Activated B cell treated with CpG ODN at 0.5 μM for 24 hours (primary cell): ENCODE measurements at regions of chr16 and their contacts with region 1.

Region 1: DNA sequence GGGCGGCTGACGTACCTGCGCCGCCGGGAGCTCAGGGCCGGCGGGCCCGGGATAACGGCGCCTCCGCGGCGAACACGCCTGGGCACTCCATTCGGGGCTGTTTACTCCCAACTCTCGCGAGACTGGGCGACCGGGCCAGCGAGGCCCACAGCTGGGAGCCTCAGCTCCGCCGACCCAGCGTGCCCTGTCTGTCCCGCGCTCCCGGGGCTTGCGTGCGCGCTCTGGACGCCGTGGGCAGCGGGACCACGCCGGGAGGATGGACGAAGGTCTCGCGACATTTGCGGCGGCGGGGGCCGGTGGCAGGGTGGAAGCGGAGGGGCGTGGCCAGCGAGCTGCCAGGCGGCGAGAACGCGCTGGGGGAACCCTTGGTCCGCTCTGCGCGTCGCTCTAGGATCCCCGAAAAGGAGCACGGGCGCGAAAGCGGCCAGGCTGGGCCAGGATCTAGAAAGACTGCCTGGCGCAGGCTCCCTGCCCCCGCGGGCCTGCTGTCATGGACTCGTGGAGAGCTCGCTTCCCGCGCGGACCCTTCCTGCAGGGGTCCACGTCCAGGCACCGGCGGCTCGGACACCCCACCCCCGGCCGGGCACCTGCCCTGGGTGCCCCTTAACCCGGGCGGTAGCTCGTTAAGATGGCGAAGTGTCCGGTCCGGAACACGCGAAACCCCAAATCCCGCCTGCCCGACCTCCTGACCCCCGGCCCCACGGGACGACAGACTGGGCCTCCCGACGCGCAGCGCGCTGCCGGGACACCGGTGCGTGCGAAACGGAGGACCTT is at the start of gene MBTPS1:
- DNase-seq: peak; percentile 99
- ATAC-seq: peak; percentile 91
- H3K4me3 Mint-ChIP-seq: peak within 1 kb of the TSS; percentile 92
- H3K27ac Mint-ChIP-seq: peak within 1 kb of the TSS; percentile 89
- H3K4me1 Mint-ChIP-seq: peaks cover 25% of the 10 kb centered on the region
- H3K27me3 Mint-ChIP-seq: no peaks in the 10 kb centered on the region
- CTCF ChIP-seq: no peak
- total RNA-seq, gene MBTPS1: 74.1 and 79.2 TPM in 2 replicates

Region 2: GRCh38 chr16:84044118-84044488 is 72.8 kb before region 1 on chr16:
- CTCF ChIA-PET with region 1: no interaction called
- POLR2A ChIA-PET with region 1: no interaction called
- intact Hi-C with region 1: no loop called
- DNase-seq: no peak
- ATAC-seq: no peak
- H3K4me3 Mint-ChIP-seq: no peak overlapping the region
- H3K27ac Mint-ChIP-seq: no peak overlapping the region
- H3K4me1 Mint-ChIP-seq: no peaks in the 10 kb centered on the region
- H3K27me3 Mint-ChIP-seq: peaks cover 18% of the 10 kb centered on the region
- CTCF ChIP-seq: no peak

Region 3: DNA sequence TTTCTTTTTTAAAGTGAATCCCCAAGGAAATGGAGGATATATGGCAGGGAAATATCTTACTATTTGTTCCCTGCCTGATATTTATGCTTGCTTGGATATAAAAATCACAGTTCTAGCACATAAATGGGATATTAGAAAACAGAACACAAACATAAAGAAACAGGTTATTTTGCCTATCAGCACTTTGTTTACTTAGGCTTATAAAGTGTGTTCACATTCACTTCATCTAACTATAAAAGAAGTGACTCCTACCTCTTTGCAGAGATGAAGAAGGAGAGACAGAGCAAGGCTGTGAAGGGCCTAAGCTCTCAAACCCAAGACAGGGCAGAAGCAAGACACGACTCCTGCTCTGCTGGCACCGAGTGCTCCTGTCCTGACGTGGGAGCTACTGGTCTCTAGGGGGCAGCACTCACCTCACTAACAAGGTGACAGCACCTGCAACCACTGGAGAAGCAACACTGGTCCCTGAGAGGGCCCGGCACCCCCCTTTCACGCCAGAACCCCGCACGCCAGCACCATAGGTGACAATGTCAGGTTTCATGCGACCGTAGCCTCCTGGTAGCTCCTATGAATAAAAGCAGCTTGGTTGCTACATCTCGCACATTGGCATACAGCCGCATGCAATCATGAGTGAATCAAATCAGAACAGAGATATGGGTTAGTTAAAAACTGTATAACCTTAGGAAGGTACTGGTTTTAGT is 32.2 kb before region 1 on chr16:
- CTCF ChIA-PET with region 1: interaction called, 17 read pairs
- POLR2A ChIA-PET with region 1: interaction called, 12 read pairs
- intact Hi-C with region 1: loop called (anchors 1 kb)
- DNase-seq: peak; percentile 28
- ATAC-seq: peak; percentile 65
- H3K4me3 Mint-ChIP-seq: no peak overlapping the region
- H3K27ac Mint-ChIP-seq: no peak overlapping the region
- H3K4me1 Mint-ChIP-seq: peaks cover 45% of the 10 kb centered on the region
- H3K27me3 Mint-ChIP-seq: no peaks in the 10 kb centered on the region
- CTCF ChIP-seq: no peak

Region 4: GRCh38 chr16:84132527-84133285 is 15.8 kb after region 1 on chr16:
- CTCF ChIA-PET with region 1: interaction called, 5 read pairs
- POLR2A ChIA-PET with region 1: interaction called, 33 read pairs
- intact Hi-C with region 1: loop called (anchors 1 kb)
- DNase-seq: no peak
- ATAC-seq: peak; percentile 77
- H3K4me3 Mint-ChIP-seq: no peak overlapping the region
- H3K27ac Mint-ChIP-seq: peak overlapping the region; percentile 53
- H3K4me1 Mint-ChIP-seq: peaks cover 29% of the 10 kb centered on the region
- H3K27me3 Mint-ChIP-seq: no peaks in the 10 kb centered on the region
- CTCF ChIP-seq: no peak